CD14-positive monocyte (primary cell): ENCODE measurements at regions of chr3 and their contacts with region 1.

Region 1: DNA sequence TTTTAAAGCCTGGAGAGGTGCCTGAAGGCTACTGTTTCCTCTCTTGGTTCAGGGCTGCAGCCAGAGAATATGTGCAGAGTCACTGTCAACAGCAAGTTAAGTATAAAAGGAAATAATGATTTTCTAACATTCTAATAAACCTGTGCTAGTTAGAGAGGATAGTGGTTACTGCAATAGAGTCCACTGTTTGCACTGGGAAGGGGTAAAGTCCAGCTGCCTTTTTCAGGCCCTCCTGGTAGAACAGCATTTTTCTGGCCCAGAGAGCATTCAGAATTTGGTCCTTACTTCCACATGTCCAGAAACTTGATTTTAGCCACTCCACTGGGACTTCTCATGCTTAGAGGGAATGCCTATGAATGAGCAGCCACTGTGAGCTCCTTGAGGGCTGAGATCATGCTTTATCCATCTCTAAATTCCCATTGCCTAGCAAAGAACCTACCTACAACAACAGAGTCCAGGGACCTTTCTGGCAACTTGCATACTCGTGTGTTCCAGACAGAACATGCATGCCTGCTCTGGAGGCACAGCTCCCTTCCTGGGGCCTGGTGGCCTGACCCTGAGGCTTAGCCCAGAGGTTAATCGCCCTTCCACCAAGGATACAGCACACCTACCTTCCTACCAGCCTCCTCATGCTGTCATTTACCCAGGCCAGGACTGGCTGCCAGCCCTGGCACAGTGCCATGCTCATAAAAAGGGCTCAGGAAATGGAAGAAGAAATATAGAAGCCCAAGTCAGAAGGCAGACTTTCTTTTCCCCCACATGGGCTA is 50.3 kb upstream of the ATP13A3 start:
- DNase-seq: no peak
- H3K4me3 ChIP-seq: no peak overlapping the region
- H3K4me3 Mint-ChIP-seq: no peak overlapping the region
- H3K27ac ChIP-seq: no peak overlapping the region
- H3K27ac Mint-ChIP-seq: peak overlapping the region in 3 of 7 donors; percentile 17 to 50 (median 25)
- H3K4me1 ChIP-seq: peaks cover 14 to 29% of the 10 kb centered on the region in 2 donors
- H3K4me1 Mint-ChIP-seq: peaks cover 27% of the 10 kb centered on the region
- H3K27me3 ChIP-seq: no peaks in the 10 kb centered on the region
- H3K27me3 Mint-ChIP-seq: peaks cover 0 to 2% (median 0%) of the 10 kb centered on the region in 3 donors
- CTCF ChIP-seq: no peak

Region 2: GRCh38 chr3:194381460-194381875 is 155.6 kb before region 1 on chr3:
- intact Hi-C with region 1: no loop called
- DNase-seq: no peak
- H3K4me3 ChIP-seq: no peak overlapping the region
- H3K4me3 Mint-ChIP-seq: no peak overlapping the region
- H3K27ac ChIP-seq: no peak overlapping the region
- H3K27ac Mint-ChIP-seq: no peak overlapping the region
- H3K4me1 ChIP-seq: no peaks in the 10 kb centered on the region
- H3K4me1 Mint-ChIP-seq: no peaks in the 10 kb centered on the region
- H3K27me3 ChIP-seq: no peaks in the 10 kb centered on the region
- H3K27me3 Mint-ChIP-seq: peaks cover 14 to 29% (median 20%) of the 10 kb centered on the region in 3 donors
- CTCF ChIP-seq: no peak

Region 3: GRCh38 chr3:194573691-194574437 is 36.8 kb after region 1 on chr3:
- intact Hi-C with region 1: loop called in 1 of 2 experiments (anchors 5 kb)
- DNase-seq: peak; percentile 36 to 71 (median 66)
- H3K4me3 ChIP-seq: no peak overlapping the region
- H3K4me3 Mint-ChIP-seq: no peak overlapping the region
- H3K27ac ChIP-seq: no peak overlapping the region
- H3K27ac Mint-ChIP-seq: peak overlapping the region in 2 of 7 donors; percentile 37 to 43
- H3K4me1 ChIP-seq: peaks cover 50 to 68% of the 10 kb centered on the region in 2 donors
- H3K4me1 Mint-ChIP-seq: peaks cover 72% of the 10 kb centered on the region
- H3K27me3 ChIP-seq: peaks cover 0 to 9% of the 10 kb centered on the region in 2 donors
- H3K27me3 Mint-ChIP-seq: peaks cover 15 to 20% (median 18%) of the 10 kb centered on the region in 3 donors
- CTCF ChIP-seq: peak; percentile 69

Region 4: DNA sequence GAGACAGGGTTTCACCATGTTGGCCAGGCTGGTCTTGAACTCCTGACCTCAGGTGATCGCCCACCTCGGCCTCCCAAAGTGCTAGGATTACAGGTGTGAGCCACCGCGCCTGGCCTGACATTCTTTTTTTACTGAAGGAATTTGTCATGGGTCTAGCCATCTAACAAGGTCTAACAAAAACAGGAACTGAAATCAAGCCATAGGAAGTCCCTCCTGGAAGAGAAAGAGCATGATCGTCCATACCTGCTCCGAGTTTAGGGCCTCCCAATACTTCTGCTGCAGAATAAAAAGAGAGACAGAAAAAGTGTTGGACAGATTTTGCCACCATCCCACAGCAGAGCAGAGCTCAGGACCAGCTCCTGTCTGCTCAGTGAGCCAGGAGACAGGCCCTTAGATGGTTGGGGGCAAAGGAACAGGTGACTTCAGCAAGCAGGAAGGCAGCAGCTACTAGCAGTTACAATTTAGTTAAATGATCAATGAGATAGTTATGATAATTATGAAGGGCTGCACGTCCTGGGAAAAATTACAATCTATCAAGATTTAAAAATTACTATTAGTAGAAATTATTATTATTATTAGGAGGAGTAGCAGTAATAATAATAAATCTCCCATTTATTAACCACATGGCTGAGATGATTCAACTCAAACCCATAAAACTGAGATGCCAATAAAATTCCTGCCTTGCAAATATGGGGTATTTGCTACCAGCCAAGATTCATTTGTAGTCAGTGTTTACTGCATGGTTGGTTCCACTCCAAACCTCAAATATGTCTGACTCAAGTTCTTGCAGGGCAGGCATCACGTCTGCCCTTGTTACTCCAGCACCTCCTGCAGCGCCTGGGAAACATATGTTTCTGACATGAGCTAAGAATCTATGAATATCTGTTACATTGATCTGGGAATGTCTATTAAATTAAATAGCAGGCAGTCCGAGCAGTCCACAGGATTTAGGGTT is 56.0 kb after region 1 on chr3:
- intact Hi-C with region 1: loop called in 1 of 2 experiments (anchors 10 kb)
- DNase-seq: peak in 2 of 3 donors; percentile 65 to 69
- H3K4me3 ChIP-seq: no peak overlapping the region
- H3K4me3 Mint-ChIP-seq: peak overlapping the region in 1 of 2 donors; percentile 5
- H3K27ac ChIP-seq: no peak overlapping the region
- H3K27ac Mint-ChIP-seq: peak overlapping the region in 5 of 7 donors; percentile 38 to 84 (median 70)
- H3K4me1 ChIP-seq: peaks cover 10 to 15% of the 10 kb centered on the region in 2 donors
- H3K4me1 Mint-ChIP-seq: peaks cover 12% of the 10 kb centered on the region
- H3K27me3 ChIP-seq: no peaks in the 10 kb centered on the region
- H3K27me3 Mint-ChIP-seq: peaks cover 0 to 3% (median 0%) of the 10 kb centered on the region in 3 donors
- CTCF ChIP-seq: no peak